ENCODE measurements at regions of chr10 and their contacts with region 1.

Region 1: GRCh38 chr10:122374237-122374869 is at the start of gene PLEKHA1:
- DNase-seq: peak; percentile 93 to 98
- H3K4me3 ChIP-seq: peak within 1 kb of the TSS; percentile 85
- CTCF ChIP-seq: no peak
- POLR2A ChIP-seq: peak in 1 of 2 donors; percentile 49
- total RNA-seq, gene PLEKHA1: 83.6 to 116 (median 105) TPM

Region 2: DNA sequence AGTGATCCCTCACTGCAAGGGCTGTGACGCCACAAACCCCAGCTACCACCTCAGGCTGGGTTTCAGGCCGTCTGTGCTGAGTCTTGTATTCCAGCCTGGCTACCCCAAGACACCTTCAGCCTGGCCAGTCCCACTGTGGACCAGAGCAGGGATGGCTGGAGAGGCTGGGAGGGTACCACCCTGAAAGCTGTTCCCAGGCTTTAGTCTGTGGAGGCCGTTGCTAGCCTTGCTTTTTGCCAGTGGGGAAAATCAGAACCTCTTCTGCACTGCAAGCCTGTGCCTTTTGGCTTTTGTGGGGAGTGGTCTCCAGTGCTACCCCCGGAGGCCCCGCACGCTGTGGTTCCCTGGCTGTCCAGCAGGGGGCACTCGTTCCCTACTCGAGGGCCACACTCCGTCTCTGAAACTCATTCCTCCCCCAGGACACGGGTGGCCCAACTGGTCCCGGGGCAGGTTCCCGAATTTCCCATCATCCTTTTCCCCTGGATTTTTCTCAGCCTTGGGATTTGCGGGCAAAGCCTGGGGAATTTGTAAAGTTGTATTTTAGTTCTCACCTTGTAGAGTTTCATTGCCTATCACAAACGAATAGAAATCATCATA is 231.6 kb before region 1 on chr10:
- intact Hi-C with region 1: loop called (anchors 10 kb)
- DNase-seq: no peak
- H3K4me3 ChIP-seq: no peak overlapping the region
- CTCF ChIP-seq: peak in 1 of 3 donors; percentile 48
- POLR2A ChIP-seq: no peak